K562 (cell line): ENCODE measurements at regions of chr17 and their contacts with region 1.

Region 1: DNA sequence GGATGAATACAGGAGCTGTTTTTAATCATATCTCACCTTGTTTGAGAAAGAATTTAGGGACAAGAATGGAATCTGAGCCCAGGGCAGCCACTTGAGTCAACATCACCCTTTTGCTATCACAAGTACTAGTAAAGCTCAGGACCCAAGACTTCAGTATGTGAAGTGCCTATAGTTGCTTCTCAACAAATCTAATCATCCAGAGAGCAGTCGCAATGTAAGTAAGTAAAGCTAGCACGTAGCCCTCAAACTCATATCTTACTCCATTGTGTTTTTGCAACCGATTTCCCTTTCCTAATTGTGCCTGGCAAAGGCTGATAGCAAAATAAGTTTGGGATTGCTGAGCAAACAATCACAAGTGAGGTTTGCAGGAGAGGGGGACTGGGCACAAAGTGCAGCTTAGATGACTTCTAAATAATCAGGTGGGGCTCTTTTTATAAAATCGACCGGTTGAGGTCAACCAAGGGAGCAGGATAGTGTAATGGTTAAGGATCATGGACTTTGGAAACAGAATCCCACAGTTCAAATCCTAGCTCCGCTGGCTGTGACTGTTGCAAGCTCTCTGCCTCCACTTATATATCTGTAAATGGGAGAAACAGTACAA is 13.0 kb downstream of the TOB1 start:
- DNase-seq: no peak
- ATAC-seq: no peak
- H3K4me3 ChIP-seq: no peak overlapping the region
- H3K27ac ChIP-seq: no peak overlapping the region
- H3K4me1 ChIP-seq: peaks cover 3 to 16% of the 10 kb centered on the region in 2 experiments; a peak in 3 of 5 replicates
- H3K27me3 ChIP-seq: no peaks in the 10 kb centered on the region
- CTCF ChIP-seq: no peak
- EP300 ChIP-seq: no peak
- POLR2A ChIP-seq: no peak
- RAD21 ChIP-seq: no peak

Region 2: GRCh38 chr17:50758989-50759544 is 94.0 kb before region 1 on chr17:
- CTCF ChIA-PET with region 1: no interaction called
- POLR2A ChIA-PET with region 1: no interaction called
- in situ Hi-C with region 1: no loop called
- intact Hi-C with region 1: no loop called
- DNase-seq: no peak
- ATAC-seq: no peak
- H3K4me3 ChIP-seq: no peak overlapping the region
- H3K27ac ChIP-seq: no peak overlapping the region
- H3K4me1 ChIP-seq: peaks cover 0 to 8% of the 10 kb centered on the region in 2 experiments; a peak in 2 of 5 replicates
- H3K27me3 ChIP-seq: no peaks in the 10 kb centered on the region
- CTCF ChIP-seq: no peak
- EP300 ChIP-seq: no peak
- POLR2A ChIP-seq: no peak
- RAD21 ChIP-seq: no peak

Region 3: DNA sequence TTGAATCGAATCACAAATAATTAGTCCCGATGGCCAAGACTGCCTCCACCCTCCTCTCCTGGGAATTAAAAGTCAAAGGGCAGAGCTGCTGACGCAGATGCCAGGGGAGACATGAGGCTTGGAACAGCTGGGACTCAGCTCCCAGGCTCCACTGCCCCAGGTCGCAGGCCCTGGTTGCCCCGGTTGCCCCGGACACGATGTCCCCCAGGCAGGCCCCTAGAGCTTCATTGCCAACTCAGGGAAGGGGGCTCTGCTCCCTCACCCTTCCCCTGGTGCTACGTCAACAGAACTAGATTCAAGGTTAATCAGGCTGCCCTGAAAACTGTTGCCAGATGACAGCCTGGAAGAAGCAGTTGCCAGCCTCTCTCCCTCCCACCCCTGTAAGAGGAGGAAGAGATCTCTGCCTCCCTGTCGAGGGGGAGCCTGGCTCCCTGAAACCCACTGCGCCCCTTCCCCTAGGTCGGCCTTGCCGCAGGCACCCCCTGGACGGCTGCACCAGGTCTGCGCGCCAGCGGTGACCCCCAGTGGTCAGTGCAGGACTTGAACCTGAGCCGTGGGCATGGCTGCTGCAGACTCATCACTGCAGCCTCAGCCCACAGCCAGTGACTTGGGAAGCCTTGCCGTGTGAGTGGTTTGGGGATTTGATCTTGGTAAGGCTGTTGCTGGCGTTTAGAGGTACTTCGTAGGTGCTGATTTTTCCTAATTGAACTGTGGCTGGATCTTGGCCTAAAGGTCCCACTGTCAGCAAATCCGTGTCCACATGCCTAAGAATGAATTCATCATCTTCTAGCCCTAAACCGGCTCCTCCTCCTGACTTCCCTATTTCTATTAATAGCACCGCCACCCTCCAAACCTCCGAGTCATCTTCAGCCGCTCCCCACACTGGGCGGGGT is 97.1 kb after region 1 on chr17:
- CTCF ChIA-PET with region 1: interaction called, 26 read pairs
- POLR2A ChIA-PET with region 1: interaction called, 11 read pairs
- in situ Hi-C with region 1: no loop called
- intact Hi-C with region 1: loop called (anchors 1 kb)
- DNase-seq: peak; percentile 80 to 89 (median 84)
- ATAC-seq: peak; percentile 93
- H3K4me3 ChIP-seq: peak overlapping the region; percentile 9
- H3K27ac ChIP-seq: peak overlapping the region; percentile 73
- H3K4me1 ChIP-seq: peaks cover 46 to 74% of the 10 kb centered on the region in 2 experiments
- H3K27me3 ChIP-seq: no peaks in the 10 kb centered on the region
- CTCF ChIP-seq: peak; percentile 88 to 93 (median 92)
- EP300 ChIP-seq: no peak
- POLR2A ChIP-seq: no peak
- RAD21 ChIP-seq: peak; percentile 97 to 99

Region 4: GRCh38 chr17:50956750-50957523 is 103.8 kb after region 1 on chr17:
- CTCF ChIA-PET with region 1: interaction called, 26 read pairs
- POLR2A ChIA-PET with region 1: interaction called, 11 read pairs
- in situ Hi-C with region 1: no loop called
- intact Hi-C with region 1: no loop called
- DNase-seq: peak; percentile 73 to 78 (median 76)
- ATAC-seq: peak; percentile 95
- H3K4me3 ChIP-seq: no peak overlapping the region
- H3K27ac ChIP-seq: no peak overlapping the region
- H3K4me1 ChIP-seq: peaks cover 0 to 14% of the 10 kb centered on the region in 2 experiments; a peak in 3 of 5 replicates
- H3K27me3 ChIP-seq: no peaks in the 10 kb centered on the region
- CTCF ChIP-seq: peak; percentile 78 to 92 (median 79)
- EP300 ChIP-seq: no peak
- POLR2A ChIP-seq: no peak
- RAD21 ChIP-seq: peak; percentile 68 to 76